ENCODE measurements at regions of chr1 and their contacts with region 1.

Region 1: DNA sequence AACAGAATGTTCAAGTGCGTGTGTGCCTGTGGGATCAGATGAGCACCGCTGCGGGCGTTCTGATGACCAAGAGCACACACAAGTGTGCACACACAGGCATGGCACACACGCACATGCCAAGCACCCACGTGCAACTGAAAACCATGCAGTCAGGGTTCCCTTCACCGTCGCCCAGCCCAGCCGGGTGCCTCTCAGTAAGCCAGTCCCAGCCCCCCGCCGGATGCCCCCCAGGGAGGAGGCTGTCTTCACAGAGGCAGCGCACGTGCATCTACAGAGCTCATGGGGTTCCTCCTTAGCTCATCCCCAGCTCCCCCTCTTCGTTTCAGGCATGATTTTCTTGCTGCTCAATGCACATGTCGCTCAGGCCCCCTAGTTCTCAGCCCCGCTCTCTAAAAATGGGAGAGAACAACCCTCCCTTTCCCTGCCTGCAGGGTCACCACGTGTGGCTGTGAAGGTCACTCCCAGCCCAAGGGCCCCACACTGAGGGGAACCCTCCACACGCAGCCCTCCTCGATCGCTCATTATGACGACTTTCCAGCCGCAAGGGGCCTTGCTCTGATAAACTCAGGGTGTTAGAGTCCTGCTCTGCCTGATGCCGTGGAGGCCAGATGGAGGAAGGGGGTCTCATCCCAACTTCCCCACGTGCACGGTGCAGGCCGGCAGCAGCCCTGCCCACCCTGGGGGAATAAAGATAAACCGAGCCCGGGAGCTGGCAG is 30.4 kb upstream of the ARHGEF16 start:
- DNase-seq: no peak
- H3K4me3 ChIP-seq: no peak overlapping the region
- H3K27ac ChIP-seq: no peak overlapping the region
- H3K4me1 ChIP-seq: no peaks in the 10 kb centered on the region
- H3K27me3 ChIP-seq: peaks cover 21% of the 10 kb centered on the region
- CTCF ChIP-seq: no peak
- EP300 ChIP-seq: no peak
- RAD21 ChIP-seq: no peak

Region 2: GRCh38 chr1:2821966-2822620 is 602.0 kb before region 1 on chr1:
- CTCF ChIA-PET with region 1: interaction called, 17 read pairs
- POLR2A ChIA-PET with region 1: no interaction called
- DNase-seq: peak; percentile 82
- H3K4me3 ChIP-seq: no peak overlapping the region
- H3K27ac ChIP-seq: no peak overlapping the region
- H3K4me1 ChIP-seq: no peaks in the 10 kb centered on the region
- H3K27me3 ChIP-seq: no peaks in the 10 kb centered on the region; the same call in 1 of the 2 replicates
- CTCF ChIP-seq: peak; percentile 35; the same call in 1 of the 2 replicates
- EP300 ChIP-seq: no peak
- RAD21 ChIP-seq: peak; percentile 52

Region 3: GRCh38 chr1:3012456-3013291 is 411.4 kb before region 1 on chr1:
- CTCF ChIA-PET with region 1: interaction called, 22 read pairs
- POLR2A ChIA-PET with region 1: no interaction called
- DNase-seq: peak; percentile 88
- H3K4me3 ChIP-seq: no peak overlapping the region
- H3K27ac ChIP-seq: no peak overlapping the region
- H3K4me1 ChIP-seq: no peaks in the 10 kb centered on the region
- H3K27me3 ChIP-seq: peaks cover 12% of the 10 kb centered on the region; the same call in 1 of the 2 replicates
- CTCF ChIP-seq: peak; percentile 50
- EP300 ChIP-seq: no peak
- RAD21 ChIP-seq: peak; percentile 49

Region 4: GRCh38 chr1:3024019-3024418 is 400.0 kb before region 1 on chr1:
- CTCF ChIA-PET with region 1: no interaction called
- POLR2A ChIA-PET with region 1: no interaction called
- DNase-seq: no peak
- H3K4me3 ChIP-seq: no peak overlapping the region
- H3K27ac ChIP-seq: no peak overlapping the region
- H3K4me1 ChIP-seq: no peaks in the 10 kb centered on the region
- H3K27me3 ChIP-seq: no peaks in the 10 kb centered on the region
- CTCF ChIP-seq: no peak
- EP300 ChIP-seq: no peak
- RAD21 ChIP-seq: no peak

Region 5: DNA sequence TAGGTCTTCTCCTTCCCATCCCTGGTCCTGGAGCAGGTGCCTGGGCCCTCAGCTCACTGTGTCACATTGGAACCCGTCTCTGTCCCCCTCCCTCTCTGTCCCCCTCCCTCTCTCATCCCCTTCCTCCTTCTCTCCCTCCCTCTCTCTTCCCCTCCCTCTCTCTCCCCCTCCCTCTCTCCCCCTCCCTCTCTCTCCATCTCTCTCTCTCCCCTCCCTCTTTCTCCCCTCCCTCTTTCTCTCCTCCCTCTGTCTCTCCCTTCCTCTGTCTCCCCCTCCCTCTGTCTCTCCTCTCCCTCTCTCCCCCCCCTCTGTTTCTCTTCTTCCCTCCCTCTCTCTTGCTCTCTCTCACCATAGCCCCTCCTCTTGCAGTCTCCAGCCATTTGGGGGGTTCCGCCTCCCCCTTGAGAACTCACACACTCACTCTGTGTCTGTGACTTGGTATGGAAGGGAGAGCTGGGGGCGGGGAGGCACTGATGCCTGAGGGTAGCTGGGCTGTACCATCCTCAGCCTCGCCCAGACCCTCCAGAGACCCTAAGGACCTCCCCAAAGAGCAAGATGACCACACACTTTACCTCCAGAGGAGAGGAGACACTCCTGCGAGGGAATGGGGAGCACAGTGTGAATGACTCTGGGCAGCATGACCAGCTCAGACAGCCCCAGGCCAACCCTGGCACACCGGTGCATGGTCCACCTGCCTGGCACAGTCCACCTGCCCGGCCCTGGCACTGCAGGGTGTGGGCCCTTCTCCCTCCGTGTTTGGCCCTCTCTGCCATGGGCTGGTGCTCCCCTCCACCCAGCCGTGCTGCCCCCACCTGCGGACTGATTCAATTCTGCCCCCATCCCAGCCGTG is 72.4 kb before region 1 on chr1:
- CTCF ChIA-PET with region 1: no interaction called
- POLR2A ChIA-PET with region 1: no interaction called
- DNase-seq: no peak
- H3K4me3 ChIP-seq: no peak overlapping the region
- H3K27ac ChIP-seq: no peak overlapping the region
- H3K4me1 ChIP-seq: no peaks in the 10 kb centered on the region
- H3K27me3 ChIP-seq: 0 out of 2 replicates have a peak, but pooled peaks cover 9% of the 10 kb centered on the region
- CTCF ChIP-seq: no peak
- EP300 ChIP-seq: no peak
- RAD21 ChIP-seq: no peak

Region 6: GRCh38 chr1:3398396-3399140 is 25.5 kb before region 1 on chr1:
- CTCF ChIA-PET with region 1: interaction called, 10 read pairs
- POLR2A ChIA-PET with region 1: no interaction called
- DNase-seq: no peak
- H3K4me3 ChIP-seq: no peak overlapping the region
- H3K27ac ChIP-seq: no peak overlapping the region
- H3K4me1 ChIP-seq: no peaks in the 10 kb centered on the region; a peak in 1 of 4 replicates
- H3K27me3 ChIP-seq: peaks cover 61% of the 10 kb centered on the region
- CTCF ChIP-seq: no peak
- EP300 ChIP-seq: no peak
- RAD21 ChIP-seq: no peak

Measured in SK-N-SH (cell line).